Astrocyte of the cerebellum (primary cell): ENCODE measurements at regions of chr14 and their contacts with region 1.

Region 1: DNA sequence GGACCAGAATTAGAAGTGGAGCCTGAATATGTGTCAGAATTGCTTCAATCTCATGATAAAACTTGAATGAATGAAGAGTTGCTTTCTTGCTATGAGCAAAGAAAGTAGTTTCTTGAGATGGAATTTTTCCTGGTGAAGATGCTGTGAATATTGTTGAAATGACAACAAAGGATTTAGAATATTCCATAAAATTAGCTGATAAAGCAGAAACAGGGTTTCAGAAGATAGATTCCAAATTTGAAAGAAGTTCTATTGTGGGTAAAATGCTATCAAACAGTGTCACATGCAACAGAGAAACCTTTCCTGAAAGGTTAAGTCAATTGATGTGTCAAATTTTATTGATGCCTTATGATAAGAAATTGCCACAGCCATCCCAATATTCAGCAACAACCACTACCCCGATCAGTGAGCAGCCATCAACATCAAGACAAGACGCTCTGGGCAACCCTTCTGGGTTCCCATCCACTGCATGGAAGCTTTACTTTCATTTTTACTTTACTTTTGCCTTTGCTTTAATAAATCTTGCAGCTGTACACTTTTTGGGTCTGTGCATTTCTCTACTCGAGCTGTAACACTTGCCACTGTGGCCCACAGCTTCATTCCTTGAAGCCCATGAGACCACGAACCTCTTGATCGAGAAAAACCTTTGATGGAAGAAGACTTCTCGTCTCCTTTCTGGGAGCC is 104.0 kb upstream of the SSTR1 start:
- DNase-seq: no peak
- H3K4me3 ChIP-seq: no peak overlapping the region
- CTCF ChIP-seq: no peak

Region 2: GRCh38 chr14:37924622-37925021 is 179.1 kb before region 1 on chr14:
- in situ Hi-C with region 1: no loop called
- DNase-seq: no peak
- H3K4me3 ChIP-seq: no peak overlapping the region
- CTCF ChIP-seq: no peak

Region 3: DNA sequence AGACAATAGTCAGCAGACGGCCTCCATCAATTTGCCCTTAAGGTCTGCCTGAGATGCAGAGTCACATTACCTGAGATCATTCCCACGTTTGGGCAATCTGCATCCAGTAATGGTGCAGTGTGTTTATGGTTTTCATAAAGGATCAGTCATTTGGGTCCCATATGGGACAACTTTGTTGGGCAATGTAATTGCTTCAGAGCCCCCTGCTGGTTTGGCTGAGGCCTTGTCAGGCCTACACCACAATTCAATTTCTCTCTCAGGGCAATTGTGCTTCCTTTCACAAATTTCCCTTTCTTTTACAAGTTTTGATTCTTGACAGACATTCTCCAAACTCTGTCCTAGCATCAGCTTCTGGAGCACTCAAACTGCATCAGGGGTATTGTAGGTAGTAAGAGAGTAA is 87.2 kb before region 1 on chr14:
- in situ Hi-C with region 1: loop called (anchors 5 kb)
- DNase-seq: no peak
- H3K4me3 ChIP-seq: no peak overlapping the region
- CTCF ChIP-seq: peak; percentile 5

Region 4: GRCh38 chr14:38171197-38171596 is 67.5 kb after region 1 on chr14:
- in situ Hi-C with region 1: no loop called
- DNase-seq: peak; percentile 16
- H3K4me3 ChIP-seq: no peak overlapping the region
- CTCF ChIP-seq: no peak